HepG2 (cell line): ENCODE measurements at regions of chr1 and their contacts with region 1.

Region 1: GRCh38 chr1:54016313-54017262 is 1.4 kb downstream of the LDLRAD1 start:
- DNase-seq: peak; percentile 96
- ATAC-seq: peak; percentile 67
- H3K4me3 ChIP-seq: peak overlapping the region; percentile 49 to 69 (median 51); a peak in 5 of 6 replicates
- H3K27ac ChIP-seq: peak overlapping the region; percentile 74
- H3K4me1 ChIP-seq: peaks cover 86% of the 10 kb centered on the region
- H3K27me3 ChIP-seq: no peaks in the 10 kb centered on the region
- CTCF ChIP-seq: 0 out of 2 replicates have a peak, but pooled peaks have one; percentile 15
- EP300 ChIP-seq: peak; percentile 80 to 93
- POLR2A ChIP-seq: peak in 1 of 2 experiments; percentile 58; a peak in 2 of 4 replicates
- RAD21 ChIP-seq: no peak; the same call in 1 of the 2 replicates

Region 2: GRCh38 chr1:53413175-53414001 is 603.2 kb before region 1 on chr1:
- CTCF ChIA-PET with region 1: no interaction called
- POLR2A ChIA-PET with region 1: no interaction called
- in situ Hi-C with region 1: no loop called
- intact Hi-C with region 1: no loop called
- DNase-seq: peak; percentile 16
- ATAC-seq: peak; percentile 61; the same call in 2 of the 3 replicates
- H3K4me3 ChIP-seq: no peak overlapping the region
- H3K27ac ChIP-seq: no peak overlapping the region
- H3K4me1 ChIP-seq: no peaks in the 10 kb centered on the region
- H3K27me3 ChIP-seq: peaks cover 8 to 84% of the 10 kb centered on the region in 2 experiments; a peak in 4 of 5 replicates
- CTCF ChIP-seq: no peak
- EP300 ChIP-seq: no peak
- POLR2A ChIP-seq: no peak
- RAD21 ChIP-seq: no peak

Region 3: GRCh38 chr1:53982034-53982762 is 34.4 kb before region 1 on chr1:
- CTCF ChIA-PET with region 1: no interaction called
- POLR2A ChIA-PET with region 1: interaction called, 15 read pairs
- in situ Hi-C with region 1: no loop called
- intact Hi-C with region 1: no loop called
- DNase-seq: peak; percentile 79
- ATAC-seq: peak; percentile 90
- H3K4me3 ChIP-seq: peak overlapping the region; percentile 48 to 67 (median 58)
- H3K27ac ChIP-seq: peak overlapping the region; percentile 66
- H3K4me1 ChIP-seq: peaks cover 47% of the 10 kb centered on the region
- H3K27me3 ChIP-seq: no peaks in the 10 kb centered on the region
- CTCF ChIP-seq: no peak; the same call in 1 of the 2 replicates
- EP300 ChIP-seq: 0 out of 4 replicates have a peak, but pooled peaks of 1 of the 2 experiments have one; percentile 14
- POLR2A ChIP-seq: peak; percentile 57 to 73; a peak in 3 of 4 replicates
- RAD21 ChIP-seq: no peak

Region 4: GRCh38 chr1:54028306-54029251 is 12.0 kb after region 1 on chr1:
- CTCF ChIA-PET with region 1: no interaction called
- POLR2A ChIA-PET with region 1: interaction called, 11 read pairs
- in situ Hi-C with region 1: no loop called
- intact Hi-C with region 1: no loop called
- DNase-seq: peak; percentile 80
- ATAC-seq: peak; percentile 83
- H3K4me3 ChIP-seq: peak overlapping the region; percentile 4 to 43 (median 23)
- H3K27ac ChIP-seq: peak overlapping the region; percentile 62
- H3K4me1 ChIP-seq: peaks cover 38% of the 10 kb centered on the region
- H3K27me3 ChIP-seq: no peaks in the 10 kb centered on the region
- CTCF ChIP-seq: no peak
- EP300 ChIP-seq: peak in 1 of 2 experiments; percentile 6; a peak in 1 of 4 replicates
- POLR2A ChIP-seq: no peak
- RAD21 ChIP-seq: no peak

Region 5: GRCh38 chr1:54045496-54045895 is 28.9 kb after region 1 on chr1:
- CTCF ChIA-PET with region 1: no interaction called
- POLR2A ChIA-PET with region 1: no interaction called
- in situ Hi-C with region 1: no loop called
- intact Hi-C with region 1: no loop called
- DNase-seq: no peak
- ATAC-seq: no peak
- H3K4me3 ChIP-seq: no peak overlapping the region
- H3K27ac ChIP-seq: no peak overlapping the region
- H3K4me1 ChIP-seq: peaks cover 19% of the 10 kb centered on the region; the same call in 1 of the 2 replicates
- H3K27me3 ChIP-seq: no peaks in the 10 kb centered on the region
- CTCF ChIP-seq: no peak
- EP300 ChIP-seq: no peak
- POLR2A ChIP-seq: no peak
- RAD21 ChIP-seq: no peak